Mucosa of descending colon (tissue), 3 donors: ENCODE measurements at regions of chr11 and their contacts with region 1.

Region 1: GRCh38 chr11:9573052-9573774 is at the start of gene WEE1:
- DNase-seq: peak; percentile 98 to 100 (median 98)
- ATAC-seq: peak; percentile 87
- H3K4me3 ChIP-seq: peak within 1 kb of the TSS; percentile 77
- H3K4me1 ChIP-seq: peaks cover 24% of the 10 kb centered on the region
- CTCF ChIP-seq: no peak
- total RNA-seq, gene WEE1: 17.5 to 33.6 (median 18.0) TPM

Region 2: GRCh38 chr11:9363954-9364912 is 209.0 kb before region 1 on chr11:
- intact Hi-C with region 1: no loop called
- DNase-seq: peak; percentile 94 to 97 (median 94)
- ATAC-seq: peak; percentile 99
- H3K4me3 ChIP-seq: peak overlapping the region; percentile 11
- H3K4me1 ChIP-seq: peaks cover 4% of the 10 kb centered on the region
- CTCF ChIP-seq: no peak

Region 3: DNA sequence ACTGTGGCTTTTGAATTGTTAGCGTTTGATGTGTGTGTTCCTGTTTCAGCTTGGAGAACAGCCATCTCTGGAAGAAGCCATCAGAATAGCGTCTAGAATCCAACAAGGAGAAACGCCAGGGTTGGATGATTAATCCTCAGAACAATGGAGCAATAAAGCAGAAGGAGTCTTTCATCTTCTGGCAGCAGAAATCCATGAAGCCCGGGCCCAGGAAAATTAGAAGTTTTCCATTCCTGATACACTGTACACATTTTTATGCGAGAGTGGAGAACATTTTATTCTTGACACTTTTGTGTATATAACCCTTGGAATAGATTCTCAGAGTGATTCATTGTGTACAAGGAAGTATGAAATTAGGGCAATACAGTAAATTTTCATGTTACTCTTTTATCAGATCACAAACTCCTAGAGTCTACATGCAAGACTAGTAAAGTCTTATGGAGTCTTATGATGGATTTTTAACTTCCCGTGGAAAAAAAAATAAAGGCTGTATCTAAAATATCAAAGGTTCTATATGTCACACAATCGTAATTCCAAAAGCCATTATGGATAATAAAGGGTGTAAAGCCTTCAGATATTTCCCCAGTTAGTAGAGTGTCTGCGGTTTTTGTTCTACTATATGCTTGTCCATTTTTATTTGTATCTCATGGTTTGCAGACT is 45.6 kb before region 1 on chr11:
- intact Hi-C with region 1: loop called in 1 of 2 experiments (anchors 10 kb)
- DNase-seq: peak in 1 of 3 donors; percentile 39
- ATAC-seq: peak; percentile 72
- H3K4me3 ChIP-seq: no peak overlapping the region
- H3K4me1 ChIP-seq: peaks cover 26% of the 10 kb centered on the region
- CTCF ChIP-seq: no peak

Region 4: DNA sequence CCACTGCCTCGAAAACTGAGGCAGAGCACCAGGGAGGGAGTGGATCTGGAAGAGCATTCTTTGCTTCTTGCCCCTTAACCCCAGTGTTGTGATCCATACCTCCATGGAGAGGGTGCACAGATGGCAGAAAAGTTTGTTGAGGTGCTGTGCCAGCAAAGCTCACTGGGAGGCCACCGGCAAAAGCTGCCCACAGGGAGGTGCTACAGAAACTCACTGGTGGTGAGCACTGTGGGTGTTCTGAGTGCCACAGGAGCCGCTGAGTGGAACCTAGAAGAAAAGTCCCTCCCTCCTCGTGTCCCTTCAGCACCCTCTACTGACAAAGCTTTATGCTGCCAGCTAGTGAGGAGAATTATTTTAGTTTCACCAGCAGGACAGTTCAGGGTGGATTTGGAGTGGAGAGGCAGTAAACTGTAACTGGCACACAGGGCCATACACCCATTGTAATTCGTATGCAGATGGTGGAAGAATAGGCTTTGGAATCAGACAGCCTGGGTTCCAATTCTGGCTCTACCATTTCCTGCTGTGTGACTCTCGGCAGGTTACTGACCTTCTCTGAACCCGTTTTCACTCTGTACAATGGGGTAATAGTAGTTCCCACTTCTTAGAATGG is 175.3 kb after region 1 on chr11:
- intact Hi-C with region 1: no loop called
- DNase-seq: peak; percentile 53 to 65 (median 62)
- ATAC-seq: peak; percentile 94
- H3K4me3 ChIP-seq: no peak overlapping the region
- H3K4me1 ChIP-seq: peaks cover 3% of the 10 kb centered on the region
- CTCF ChIP-seq: peak; percentile 51